ENCODE measurements at regions of chr2 and their contacts with region 1.

Region 1: GRCh38 chr2:27723372-27724144 is 48.0 kb upstream of the MRPL33 start:
- DNase-seq: peak; percentile 85
- H3K4me3 ChIP-seq: no peak overlapping the region; a peak in 1 of 4 replicates
- H3K27ac ChIP-seq: no peak overlapping the region
- H3K4me1 ChIP-seq: peaks cover 7 to 24% of the 10 kb centered on the region in 2 experiments; a peak in 3 of 4 replicates
- H3K27me3 ChIP-seq: no peaks in the 10 kb centered on the region
- CTCF ChIP-seq: peak; percentile 84
- EP300 ChIP-seq: no peak
- RAD21 ChIP-seq: peak; percentile 83

Region 2: DNA sequence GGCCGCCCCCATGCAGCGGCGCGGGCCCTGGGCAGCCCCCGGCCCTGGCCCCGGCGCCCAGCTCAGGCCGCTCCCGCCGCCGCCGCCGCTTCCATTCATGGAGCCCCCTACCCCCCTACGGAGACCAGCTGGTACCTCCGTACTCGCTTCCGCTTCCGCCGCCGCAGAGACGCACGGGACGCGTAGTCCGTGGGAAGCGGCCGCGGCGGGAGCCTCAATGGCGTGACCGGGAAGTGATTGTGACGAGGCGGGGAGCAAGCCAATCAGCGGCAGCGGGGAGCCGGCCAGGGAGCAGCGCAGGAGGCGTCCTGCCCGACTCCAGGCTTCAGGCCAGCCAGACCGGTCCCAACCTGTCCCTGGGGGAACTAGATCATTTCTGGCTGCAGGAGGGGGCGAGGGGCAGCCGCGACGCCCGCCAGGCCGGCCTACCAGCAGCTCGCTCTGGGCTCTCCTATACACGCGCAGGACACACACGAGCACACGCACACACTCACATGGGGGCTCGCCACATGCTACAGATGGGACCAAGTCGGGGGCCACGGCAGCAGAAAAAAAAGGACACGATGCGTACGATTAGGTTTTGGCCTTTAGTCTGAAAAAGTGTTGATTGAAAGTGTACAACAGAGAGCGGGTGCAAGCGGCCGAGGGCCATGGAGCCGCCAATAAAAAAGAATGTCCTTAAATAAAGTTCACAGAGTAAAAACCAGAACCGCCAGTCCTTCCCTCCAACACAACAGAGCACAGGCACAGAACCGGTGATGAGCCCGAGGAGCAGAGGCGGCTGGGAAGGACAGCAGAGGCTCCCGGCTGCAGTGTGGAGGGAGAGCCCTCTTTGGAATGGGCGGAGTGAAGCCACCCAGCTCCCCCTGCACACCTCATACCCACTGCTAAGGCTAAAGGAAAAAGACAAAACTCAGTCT is 342.7 kb before region 1 on chr2 and contains the start of gene ZNF513:
- CTCF ChIA-PET with region 1: no interaction called
- POLR2A ChIA-PET with region 1: no interaction called
- DNase-seq: peak; percentile 99
- H3K4me3 ChIP-seq: peak within 1 kb of the TSS; percentile 80 to 86
- H3K27ac ChIP-seq: peak within 1 kb of the TSS; percentile 68 to 95
- H3K4me1 ChIP-seq: peaks cover 15 to 53% of the 10 kb centered on the region in 2 experiments; a peak in 3 of 4 replicates
- H3K27me3 ChIP-seq: no peaks in the 10 kb centered on the region
- CTCF ChIP-seq: no peak
- EP300 ChIP-seq: no peak
- RAD21 ChIP-seq: no peak
- polyA plus RNA-seq, gene ZNF513: 53.8 and 63.7 TPM in 2 replicates

Region 3: GRCh38 chr2:27461118-27461517 is 262.4 kb before region 1 on chr2:
- CTCF ChIA-PET with region 1: no interaction called
- POLR2A ChIA-PET with region 1: no interaction called
- DNase-seq: no peak
- H3K4me3 ChIP-seq: no peak overlapping the region
- H3K27ac ChIP-seq: no peak overlapping the region
- H3K4me1 ChIP-seq: no peaks in the 10 kb centered on the region
- H3K27me3 ChIP-seq: no peaks in the 10 kb centered on the region
- CTCF ChIP-seq: no peak
- EP300 ChIP-seq: no peak
- RAD21 ChIP-seq: no peak

Region 4: GRCh38 chr2:27566628-27567027 is 156.9 kb before region 1 on chr2:
- CTCF ChIA-PET with region 1: no interaction called
- POLR2A ChIA-PET with region 1: no interaction called
- DNase-seq: no peak
- H3K4me3 ChIP-seq: no peak overlapping the region
- H3K27ac ChIP-seq: peak overlapping the region in 1 of 2 experiments; percentile 62; a peak in 2 of 4 replicates
- H3K4me1 ChIP-seq: peaks cover 0 to 6% of the 10 kb centered on the region in 2 experiments; a peak in 1 of 4 replicates
- H3K27me3 ChIP-seq: no peaks in the 10 kb centered on the region
- CTCF ChIP-seq: no peak
- EP300 ChIP-seq: no peak
- RAD21 ChIP-seq: no peak

Region 5: DNA sequence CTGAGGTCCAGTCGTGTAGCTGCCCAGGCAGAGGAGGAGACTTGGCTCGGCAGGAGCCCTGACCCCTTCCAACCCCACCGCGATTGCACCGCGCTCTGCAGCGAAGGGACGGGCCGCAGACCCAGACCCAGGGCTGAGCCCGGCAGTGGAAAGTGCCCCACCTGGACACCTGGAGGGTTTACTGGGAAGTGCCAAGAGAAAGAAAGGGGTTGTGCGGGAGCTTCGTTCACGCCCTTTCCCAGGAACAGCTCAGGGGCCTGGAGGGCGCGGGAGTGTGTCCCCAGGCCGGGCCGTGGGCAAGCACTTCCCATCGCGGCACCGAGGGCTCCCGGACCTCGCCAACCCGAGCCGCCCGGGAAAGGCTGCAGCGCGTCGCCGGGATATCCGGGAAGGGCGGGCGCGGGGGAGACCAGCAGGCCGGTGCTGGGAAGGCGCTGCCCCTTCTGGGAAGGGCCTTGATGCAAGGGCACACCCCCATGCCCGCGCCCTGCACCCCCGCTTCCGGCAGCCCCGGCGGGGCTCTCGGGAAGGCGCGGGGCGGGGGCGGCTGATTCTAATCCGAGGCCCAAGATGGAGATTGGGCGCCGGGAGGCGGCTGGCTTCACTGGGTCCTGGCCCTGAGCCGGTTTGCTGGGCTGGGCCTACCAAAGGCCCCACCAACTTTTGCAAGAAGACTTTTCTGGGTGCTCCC is 11.8 kb after region 1 on chr2:
- CTCF ChIA-PET with region 1: interaction called, 52 read pairs
- POLR2A ChIA-PET with region 1: interaction called, 3 read pairs
- DNase-seq: no peak
- H3K4me3 ChIP-seq: no peak overlapping the region
- H3K27ac ChIP-seq: no peak overlapping the region
- H3K4me1 ChIP-seq: peaks cover 0 to 19% of the 10 kb centered on the region in 2 experiments; a peak in 2 of 4 replicates
- H3K27me3 ChIP-seq: no peaks in the 10 kb centered on the region
- CTCF ChIP-seq: no peak
- EP300 ChIP-seq: no peak
- RAD21 ChIP-seq: no peak

Region 6: GRCh38 chr2:27782701-27783100 is 59.1 kb after region 1 on chr2:
- CTCF ChIA-PET with region 1: no interaction called
- POLR2A ChIA-PET with region 1: no interaction called
- DNase-seq: no peak
- H3K4me3 ChIP-seq: no peak overlapping the region
- H3K27ac ChIP-seq: no peak overlapping the region
- H3K4me1 ChIP-seq: no peaks in the 10 kb centered on the region
- H3K27me3 ChIP-seq: no peaks in the 10 kb centered on the region
- CTCF ChIP-seq: no peak
- EP300 ChIP-seq: no peak
- RAD21 ChIP-seq: no peak

Region 7: DNA sequence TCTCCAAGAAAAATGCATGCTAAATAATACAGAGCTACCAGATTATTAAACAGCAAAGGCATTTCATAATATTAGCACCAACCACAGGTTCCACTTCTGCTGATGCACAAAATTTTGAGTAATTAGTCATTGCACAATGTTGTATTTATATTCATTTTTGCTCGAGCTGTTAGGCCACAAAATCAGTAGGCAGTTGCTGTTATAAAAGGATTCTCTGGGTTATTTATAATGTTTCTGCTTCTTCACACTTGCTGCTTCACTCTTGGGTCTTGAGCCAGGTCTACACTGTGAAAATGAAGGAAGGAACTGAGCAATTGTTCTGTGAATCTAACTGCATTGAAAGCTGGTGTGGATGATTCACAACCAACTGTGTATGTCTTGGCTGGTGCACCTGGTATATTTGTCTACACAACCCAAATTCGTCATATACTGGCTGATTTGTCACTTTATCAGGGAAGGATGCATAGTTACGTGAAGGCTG is 86.2 kb after region 1 on chr2:
- CTCF ChIA-PET with region 1: interaction called, 10 read pairs
- POLR2A ChIA-PET with region 1: no interaction called
- DNase-seq: no peak
- H3K4me3 ChIP-seq: no peak overlapping the region
- H3K27ac ChIP-seq: peak overlapping the region in 1 of 2 experiments; percentile 59; a peak in 2 of 4 replicates
- H3K4me1 ChIP-seq: peaks cover 0 to 18% of the 10 kb centered on the region in 2 experiments; a peak in 1 of 4 replicates
- H3K27me3 ChIP-seq: no peaks in the 10 kb centered on the region
- CTCF ChIP-seq: no peak
- EP300 ChIP-seq: peak in 1 of 2 experiments; percentile 48; a peak in 2 of 4 replicates
- RAD21 ChIP-seq: no peak

Region 8: GRCh38 chr2:28398101-28398834 is 674.7 kb after region 1 on chr2:
- CTCF ChIA-PET with region 1: interaction called, 31 read pairs
- POLR2A ChIA-PET with region 1: no interaction called
- DNase-seq: no peak
- H3K4me3 ChIP-seq: peak overlapping the region in 1 of 2 experiments; percentile 84; a peak in 1 of 4 replicates
- H3K27ac ChIP-seq: peak overlapping the region in 1 of 2 experiments; percentile 97; a peak in 1 of 4 replicates
- H3K4me1 ChIP-seq: peaks cover 9 to 30% of the 10 kb centered on the region in 2 experiments
- H3K27me3 ChIP-seq: no peaks in the 10 kb centered on the region
- CTCF ChIP-seq: no peak
- EP300 ChIP-seq: no peak
- RAD21 ChIP-seq: no peak

Measured in SK-N-SH (cell line).